ENCODE measurements at regions of chr12 and their contacts with region 1.

Region 1: DNA sequence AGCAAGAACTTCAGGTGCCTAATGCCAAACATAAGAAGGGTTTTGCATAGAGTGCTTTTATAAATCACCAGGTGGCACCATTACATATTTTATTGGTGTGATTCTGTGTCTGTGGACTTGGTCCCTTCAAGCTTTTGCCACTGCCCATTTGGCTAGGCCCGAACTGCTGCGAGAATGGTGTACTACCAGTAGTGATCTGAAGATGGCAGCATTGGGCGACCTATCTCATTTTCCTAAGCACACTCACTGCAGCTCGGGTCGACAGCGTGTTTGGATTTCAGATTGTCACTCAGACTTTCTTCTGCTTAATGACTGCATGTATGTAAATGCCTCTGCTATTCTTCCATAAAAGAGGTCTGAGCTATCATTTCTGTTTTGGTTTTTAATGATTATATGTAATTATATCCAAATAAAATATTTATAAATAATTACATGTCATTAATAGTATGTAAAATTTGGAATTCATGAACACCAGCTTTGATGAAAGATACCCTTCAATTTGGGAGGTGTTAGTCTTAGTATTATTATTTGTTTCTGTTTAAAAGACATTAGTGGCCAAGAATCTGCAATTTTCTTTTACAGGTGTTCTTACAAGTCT is 78.5 kb downstream of the TPH2 start:
- DNase-seq: peak; percentile 42
- ATAC-seq: peak; percentile 98
- H3K4me3 ChIP-seq: no peak overlapping the region
- H3K27ac ChIP-seq: no peak overlapping the region
- H3K4me1 ChIP-seq: no peaks in the 10 kb centered on the region
- H3K27me3 ChIP-seq: no peaks in the 10 kb centered on the region
- CTCF ChIP-seq: peak; percentile 79 to 85 (median 80)
- EP300 ChIP-seq: no peak
- POLR2A ChIP-seq: no peak
- RAD21 ChIP-seq: peak; percentile 84

Region 2: DNA sequence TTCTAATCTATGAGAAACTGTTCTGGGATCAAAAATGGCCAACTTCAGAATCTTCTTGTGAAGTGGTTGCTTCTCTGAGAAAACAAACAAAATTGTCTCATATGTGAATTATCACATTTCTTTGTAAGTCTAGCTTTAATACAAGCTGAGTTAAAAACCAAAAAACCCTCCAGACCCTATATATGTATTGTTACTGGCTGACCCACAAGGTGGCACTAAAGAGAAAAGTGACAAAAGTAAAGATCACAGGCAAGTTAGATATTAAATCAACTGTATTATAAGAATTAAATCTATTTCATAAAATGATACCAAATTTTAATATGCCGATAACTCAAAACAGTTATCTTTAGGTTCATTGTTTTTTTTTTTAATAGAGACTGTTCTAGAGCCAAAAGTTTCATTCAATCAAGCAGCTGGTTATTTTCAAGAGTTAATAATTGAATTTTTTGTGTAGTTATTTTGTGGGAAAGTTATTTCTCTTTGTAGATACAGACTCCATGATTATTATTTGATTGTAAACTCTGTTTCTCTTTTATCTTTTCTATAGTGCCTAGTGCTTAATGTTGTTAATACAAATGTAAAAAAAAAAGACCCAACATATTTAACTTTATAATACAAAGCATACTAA is 247.5 kb after region 1 on chr12:
- CTCF ChIA-PET with region 1: interaction called, 9 read pairs
- POLR2A ChIA-PET with region 1: no interaction called
- RAD21 ChIA-PET with region 1: interaction called, 3 read pairs
- SMC1A ChIA-PET with region 1: interaction called, 5 read pairs
- in situ Hi-C with region 1: no loop called
- intact Hi-C with region 1: loop called (anchors 2 kb)
- DNase-seq: no peak
- ATAC-seq: peak; percentile 49; the same call in 1 of the 3 replicates
- H3K4me3 ChIP-seq: no peak overlapping the region
- H3K27ac ChIP-seq: no peak overlapping the region
- H3K4me1 ChIP-seq: no peaks in the 10 kb centered on the region
- H3K27me3 ChIP-seq: no peaks in the 10 kb centered on the region
- CTCF ChIP-seq: peak; percentile 11 to 28 (median 22); a peak in 3 of 6 replicates
- EP300 ChIP-seq: no peak
- POLR2A ChIP-seq: no peak
- RAD21 ChIP-seq: peak; percentile 42; the same call in 1 of the 2 replicates

Region 3: GRCh38 chr12:72282721-72283120 is 265.6 kb after region 1 on chr12:
- CTCF ChIA-PET with region 1: interaction called, 4 read pairs
- POLR2A ChIA-PET with region 1: no interaction called
- RAD21 ChIA-PET with region 1: interaction called, 4 read pairs
- SMC1A ChIA-PET with region 1: no interaction called
- in situ Hi-C with region 1: loop called (anchors 10 kb)
- intact Hi-C with region 1: loop called (anchors 1 kb)
- DNase-seq: no peak
- ATAC-seq: peak; percentile 40; the same call in 1 of the 3 replicates
- H3K4me3 ChIP-seq: no peak overlapping the region
- H3K27ac ChIP-seq: no peak overlapping the region
- H3K4me1 ChIP-seq: no peaks in the 10 kb centered on the region
- H3K27me3 ChIP-seq: no peaks in the 10 kb centered on the region
- CTCF ChIP-seq: peak; percentile 15 to 33 (median 31); a peak in 3 of 6 replicates
- EP300 ChIP-seq: no peak
- POLR2A ChIP-seq: no peak
- RAD21 ChIP-seq: peak; percentile 54

Region 4: DNA sequence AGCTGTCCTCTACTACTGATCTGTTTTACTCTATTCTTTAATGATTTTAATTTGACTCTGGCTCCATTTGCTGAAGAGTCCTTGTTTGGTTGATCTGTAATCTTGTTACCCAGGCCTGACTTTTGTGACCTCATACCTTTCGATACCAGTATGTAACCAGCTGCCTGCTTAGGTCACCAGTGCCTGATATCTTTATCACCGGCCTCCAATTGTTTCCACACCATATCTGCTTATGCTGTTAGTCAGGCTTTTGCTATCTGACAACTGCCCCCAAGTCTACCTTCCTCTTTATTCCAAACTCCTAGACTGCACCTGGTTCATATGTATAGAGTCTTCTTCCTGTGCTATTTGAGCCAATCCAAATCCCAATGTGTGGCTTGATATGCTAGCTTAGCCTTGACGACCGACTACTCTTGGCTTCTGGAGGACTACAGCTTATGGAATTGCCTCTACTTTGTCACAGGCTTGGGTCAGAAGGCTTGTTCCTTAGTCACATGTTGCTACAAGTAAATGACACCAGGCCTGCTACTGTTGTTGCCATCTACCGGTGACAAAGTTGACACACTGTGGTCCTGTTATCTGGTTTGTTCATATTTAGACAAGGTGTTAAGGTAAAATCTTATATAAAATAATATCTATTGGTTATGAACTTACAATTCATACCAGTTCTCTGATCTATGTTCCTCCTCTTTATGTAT is 448.9 kb after region 1 on chr12:
- CTCF ChIA-PET with region 1: no interaction called
- POLR2A ChIA-PET with region 1: no interaction called
- RAD21 ChIA-PET with region 1: no interaction called
- SMC1A ChIA-PET with region 1: no interaction called
- in situ Hi-C with region 1: no loop called
- intact Hi-C with region 1: loop called (anchors 10 kb)
- DNase-seq: no peak
- ATAC-seq: no peak
- H3K4me3 ChIP-seq: no peak overlapping the region
- H3K27ac ChIP-seq: no peak overlapping the region
- H3K4me1 ChIP-seq: no peaks in the 10 kb centered on the region
- H3K27me3 ChIP-seq: no peaks in the 10 kb centered on the region
- CTCF ChIP-seq: no peak
- EP300 ChIP-seq: no peak
- POLR2A ChIP-seq: no peak
- RAD21 ChIP-seq: no peak

Region 5: DNA sequence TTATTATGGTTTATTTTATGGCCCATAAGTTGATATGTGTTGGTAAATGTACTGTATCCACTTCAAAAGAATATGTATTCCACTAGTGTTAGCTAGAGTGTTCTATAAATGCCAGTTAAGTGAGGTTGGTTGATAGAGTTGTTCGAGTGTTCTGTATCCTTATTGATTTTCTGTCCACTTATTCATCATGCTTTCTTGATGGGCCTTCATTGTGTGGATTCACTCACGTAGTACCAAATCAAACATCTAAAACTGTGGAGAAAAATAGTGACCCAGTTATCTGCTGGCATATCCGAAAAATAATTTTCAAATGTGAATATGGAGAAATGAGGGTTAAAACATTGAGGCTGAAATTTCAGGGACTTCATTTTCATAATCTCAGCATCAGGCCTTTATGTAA is 485.4 kb after region 1 on chr12:
- CTCF ChIA-PET with region 1: no interaction called
- POLR2A ChIA-PET with region 1: no interaction called
- RAD21 ChIA-PET with region 1: no interaction called
- SMC1A ChIA-PET with region 1: no interaction called
- in situ Hi-C with region 1: no loop called
- intact Hi-C with region 1: no loop called
- DNase-seq: no peak
- ATAC-seq: no peak
- H3K4me3 ChIP-seq: no peak overlapping the region
- H3K27ac ChIP-seq: no peak overlapping the region
- H3K4me1 ChIP-seq: no peaks in the 10 kb centered on the region
- H3K27me3 ChIP-seq: no peaks in the 10 kb centered on the region
- CTCF ChIP-seq: no peak
- EP300 ChIP-seq: no peak
- POLR2A ChIP-seq: no peak
- RAD21 ChIP-seq: no peak

Measured in GM12878 (cell line).